ENCODE measurements at regions of chr12 and their contacts with region 1.

Region 1: GRCh38 chr12:125203145-125203765 is 138.0 kb downstream of the AACS start:
- DNase-seq: no peak
- H3K4me3 ChIP-seq: no peak overlapping the region
- H3K4me3 Mint-ChIP-seq: no peak overlapping the region
- H3K27ac Mint-ChIP-seq: no peak overlapping the region
- H3K4me1 ChIP-seq: no peaks in the 10 kb centered on the region
- H3K4me1 Mint-ChIP-seq: no peaks in the 10 kb centered on the region
- H3K27me3 ChIP-seq: no peaks in the 10 kb centered on the region
- H3K27me3 Mint-ChIP-seq: peaks cover 21% of the 10 kb centered on the region
- CTCF ChIP-seq: peak; percentile 59 to 60

Region 2: DNA sequence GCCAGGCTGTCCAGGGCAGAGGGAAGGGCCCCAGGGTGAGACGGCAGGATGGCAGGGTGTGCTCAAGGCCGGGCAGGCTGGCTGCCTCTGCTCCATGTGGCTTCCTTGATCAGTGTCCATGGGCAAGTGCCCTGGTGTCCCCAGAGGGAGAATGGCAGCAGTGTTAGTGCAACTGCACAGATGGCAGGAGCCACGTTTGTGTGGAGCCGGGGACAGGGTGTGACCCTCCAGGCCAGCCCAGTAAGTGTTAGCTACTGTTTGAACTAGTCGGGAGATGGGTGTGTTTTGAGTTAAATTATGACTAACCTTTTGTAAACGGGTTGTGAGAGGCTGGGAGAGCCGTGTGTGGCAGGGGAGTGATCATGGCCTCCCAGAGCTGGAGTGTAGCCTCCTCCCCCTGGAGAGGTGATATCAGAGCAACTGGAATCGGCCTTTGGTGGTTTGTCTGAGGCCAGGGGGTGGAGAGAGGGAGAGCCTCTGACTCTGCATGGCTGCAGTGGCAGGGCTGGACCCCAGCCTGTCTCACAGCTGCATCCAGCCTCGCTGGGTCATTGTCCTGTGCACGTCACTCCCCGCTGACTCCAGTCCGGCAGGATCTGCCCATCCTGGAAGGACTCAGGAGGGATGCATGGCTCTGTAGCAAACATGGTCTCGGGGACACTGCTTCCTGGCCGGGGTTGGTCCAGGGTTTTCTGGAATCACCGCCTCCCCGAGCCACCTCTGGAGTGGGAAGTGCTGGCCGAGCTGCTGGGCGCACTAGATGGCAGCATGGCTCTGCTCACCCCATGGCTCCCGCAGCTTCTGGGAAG is 110.2 kb before region 1 on chr12:
- CTCF ChIA-PET with region 1: interaction called, 3 read pairs
- POLR2A ChIA-PET with region 1: no interaction called
- intact Hi-C with region 1: loop called (anchors 5 kb)
- DNase-seq: peak; percentile 69 to 78
- H3K4me3 ChIP-seq: no peak overlapping the region
- H3K4me3 Mint-ChIP-seq: no peak overlapping the region
- H3K27ac Mint-ChIP-seq: peak overlapping the region; percentile 11
- H3K4me1 ChIP-seq: peaks cover 22% of the 10 kb centered on the region
- H3K4me1 Mint-ChIP-seq: peaks cover 14% of the 10 kb centered on the region
- H3K27me3 ChIP-seq: no peaks in the 10 kb centered on the region
- H3K27me3 Mint-ChIP-seq: no peaks in the 10 kb centered on the region
- CTCF ChIP-seq: peak in 1 of 2 experiments; percentile 36

Measured in Caco-2 (cell line).